ENCODE measurements at regions of chr1 and their contacts with region 1.

Region 1: GRCh38 chr1:161899091-161899490 is 124.6 kb downstream of the OLFML2B start:
- DNase-seq: no peak
- H3K4me3 ChIP-seq: no peak overlapping the region
- H3K27ac ChIP-seq: no peak overlapping the region
- H3K4me1 ChIP-seq: no peaks in the 10 kb centered on the region
- H3K27me3 ChIP-seq: no peaks in the 10 kb centered on the region
- CTCF ChIP-seq: no peak
- EP300 ChIP-seq: no peak
- POLR2A ChIP-seq: no peak

Region 2: DNA sequence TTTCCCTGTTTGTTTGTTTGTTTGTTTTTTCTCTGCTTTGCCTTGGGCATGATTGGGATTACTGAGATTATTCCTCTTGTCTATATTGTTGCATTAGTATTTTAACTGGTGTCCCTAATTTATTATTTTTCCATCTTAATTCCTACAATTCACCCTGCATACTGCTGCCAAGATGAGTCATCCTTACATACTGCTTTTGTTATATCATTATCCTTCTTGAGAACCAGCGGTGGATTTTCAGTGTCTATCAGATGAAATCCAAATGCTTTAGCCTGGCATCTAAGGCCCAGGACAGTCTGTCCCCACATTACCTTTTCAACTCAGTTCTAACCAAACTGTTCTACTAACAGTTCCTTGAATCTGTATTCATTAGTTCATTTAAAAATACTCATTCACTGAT is 22.9 kb after region 1 on chr1:
- intact Hi-C with region 1: loop called (anchors 1 kb)
- DNase-seq: no peak
- H3K4me3 ChIP-seq: no peak overlapping the region
- H3K27ac ChIP-seq: peak overlapping the region in 2 of 4 donors; percentile 46 to 52
- H3K4me1 ChIP-seq: peaks cover 0 to 25% (median 11%) of the 10 kb centered on the region in 4 donors
- H3K27me3 ChIP-seq: no peaks in the 10 kb centered on the region
- CTCF ChIP-seq: no peak
- EP300 ChIP-seq: no peak
- POLR2A ChIP-seq: no peak

Region 3: GRCh38 chr1:162177126-162177525 is 278.0 kb after region 1 on chr1:
- intact Hi-C with region 1: no loop called
- DNase-seq: no peak
- H3K4me3 ChIP-seq: no peak overlapping the region
- H3K27ac ChIP-seq: no peak overlapping the region
- H3K4me1 ChIP-seq: peaks cover 0 to 27% (median 21%) of the 10 kb centered on the region in 4 donors
- H3K27me3 ChIP-seq: no peaks in the 10 kb centered on the region
- CTCF ChIP-seq: no peak
- EP300 ChIP-seq: no peak
- POLR2A ChIP-seq: no peak

Measured in sigmoid colon (tissue), 7 donors.